Gastrocnemius medialis (tissue), 4 donors: ENCODE measurements at regions of chr5 and their contacts with region 1.

Region 1: DNA sequence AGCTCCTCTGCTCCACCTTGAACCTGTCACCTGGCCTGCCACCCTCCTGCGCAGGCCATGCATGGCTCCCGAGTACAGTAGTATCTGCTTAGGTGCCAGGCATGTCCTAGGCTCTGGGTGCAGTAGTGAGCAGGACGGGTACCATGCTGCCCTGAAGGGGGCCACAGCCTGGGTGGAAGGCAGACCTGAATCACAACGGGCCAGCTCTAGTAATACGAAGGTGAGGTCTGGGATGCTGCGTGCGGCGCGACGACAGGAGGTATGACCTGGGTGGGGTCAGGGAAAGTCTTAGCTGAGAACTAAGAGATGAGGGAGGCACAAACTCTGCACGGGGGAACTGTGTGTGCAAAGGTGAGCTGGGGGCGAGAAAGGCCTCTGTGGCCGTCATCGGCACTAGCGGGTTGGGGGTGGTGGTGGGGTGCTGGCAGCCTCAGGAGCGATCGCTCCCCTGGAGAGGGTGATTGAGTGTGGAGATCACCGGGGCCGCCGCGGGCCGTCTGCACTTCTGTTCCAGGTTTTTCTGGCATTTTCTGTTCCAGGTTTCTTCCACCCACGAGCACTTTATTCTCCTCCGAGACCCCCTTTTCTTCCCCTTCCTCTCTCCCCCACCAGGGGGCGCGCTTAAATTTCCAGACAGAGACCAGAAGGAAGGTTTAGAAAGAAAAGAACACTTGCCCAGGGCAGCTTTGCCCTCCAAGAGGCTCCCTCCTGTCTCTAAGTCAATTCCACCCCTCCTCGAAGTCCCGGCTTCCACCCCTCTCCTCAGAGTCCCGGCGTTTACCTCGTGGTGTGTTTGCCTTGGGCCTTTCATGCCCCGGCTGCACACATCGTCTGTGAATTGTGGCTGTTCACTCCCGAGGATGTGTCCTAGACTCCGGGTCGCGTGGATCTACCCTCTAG is 15.1 kb downstream of the PDLIM4 start:
- DNase-seq: no peak
- ATAC-seq: peak; percentile 64 to 78
- H3K4me3 ChIP-seq: no peak overlapping the region
- H3K27ac ChIP-seq: no peak overlapping the region
- H3K4me1 ChIP-seq: peaks cover 5 to 6% of the 10 kb centered on the region in 2 donors
- H3K27me3 ChIP-seq: no peaks in the 10 kb centered on the region
- CTCF ChIP-seq: peak; percentile 63 to 86 (median 86)
- POLR2A ChIP-seq: no peak

Region 2: DNA sequence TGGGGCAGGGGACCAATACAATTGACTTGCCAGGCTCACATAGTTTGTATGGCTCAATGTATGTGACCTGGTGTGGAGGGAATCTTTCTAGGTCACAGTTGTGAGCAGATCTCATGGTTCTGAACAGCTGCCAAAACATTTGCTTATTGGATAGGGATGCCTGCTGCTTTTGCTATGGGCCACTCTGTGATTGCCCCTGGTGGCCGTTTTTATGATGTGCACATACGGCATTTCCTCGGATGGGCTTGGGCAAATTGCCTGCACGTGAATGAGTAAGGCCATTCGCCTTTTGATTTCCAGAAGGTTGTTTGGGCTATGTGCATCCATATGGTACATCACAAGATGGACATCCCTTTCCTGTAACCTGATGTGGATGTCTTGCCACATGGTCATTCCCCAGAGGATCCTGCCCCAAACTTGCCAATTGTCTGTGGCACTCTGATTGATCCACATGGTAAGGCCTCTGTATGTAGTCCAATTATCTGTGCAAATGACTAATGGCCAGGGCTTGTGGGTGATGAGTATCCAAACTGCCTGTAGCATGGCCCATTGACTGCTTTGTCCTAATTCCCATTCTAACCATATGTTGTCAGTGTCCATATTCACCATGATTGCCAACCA is 11.0 kb after region 1 on chr5:
- in situ Hi-C with region 1: no loop called
- intact Hi-C with region 1: no loop called
- DNase-seq: no peak
- ATAC-seq: no peak
- H3K4me3 ChIP-seq: no peak overlapping the region
- H3K27ac ChIP-seq: no peak overlapping the region
- H3K4me1 ChIP-seq: no peaks in the 10 kb centered on the region
- H3K27me3 ChIP-seq: no peaks in the 10 kb centered on the region
- CTCF ChIP-seq: peak in 4 of 5 experiments; percentile 20 to 46 (median 41)
- POLR2A ChIP-seq: no peak

Region 3: DNA sequence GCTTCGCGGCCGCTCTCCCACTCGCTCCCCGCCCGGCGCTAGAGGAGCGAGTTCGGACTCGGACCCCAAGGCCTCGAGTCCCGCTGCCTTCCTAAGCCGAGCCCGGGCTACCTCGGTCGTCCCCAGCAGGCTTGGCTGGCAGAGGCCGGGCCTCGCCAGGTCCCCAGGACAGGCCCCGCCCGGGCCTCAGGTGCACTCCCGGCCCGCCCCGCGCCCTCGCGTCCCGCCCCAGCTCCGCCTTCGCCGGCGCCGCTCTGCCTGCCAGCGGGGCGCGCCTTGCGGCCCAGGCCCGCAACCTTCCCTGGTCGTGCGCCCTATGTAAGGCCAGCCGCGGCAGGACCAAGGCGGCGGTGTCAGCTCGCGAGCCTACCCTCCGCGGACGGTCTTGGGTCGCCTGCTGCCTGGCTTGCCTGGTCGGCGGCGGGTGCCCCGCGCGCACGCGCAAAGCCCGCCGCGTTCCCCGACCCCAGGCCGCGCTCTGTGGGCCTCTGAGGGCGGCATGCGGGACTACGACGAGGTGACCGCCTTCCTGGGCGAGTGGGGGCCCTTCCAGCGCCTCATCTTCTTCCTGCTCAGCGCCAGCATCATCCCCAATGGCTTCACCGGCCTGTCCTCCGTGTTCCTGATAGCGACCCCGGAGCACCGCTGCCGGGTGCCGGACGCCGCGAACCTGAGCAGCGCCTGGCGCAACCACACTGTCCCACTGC is 97.1 kb after region 1 on chr5 and contains the start of gene SLC22A5:
- in situ Hi-C with region 1: loop called in 1 of 4 experiments (anchors 10 kb)
- intact Hi-C with region 1: no loop called
- DNase-seq: peak; percentile 61 to 80
- ATAC-seq: peak; percentile 73 to 75
- H3K4me3 ChIP-seq: peak within 1 kb of the TSS; percentile 64 to 82 (median 78)
- H3K27ac ChIP-seq: peak within 1 kb of the TSS; percentile 92 to 99 (median 96)
- H3K4me1 ChIP-seq: peaks cover 33 to 36% of the 10 kb centered on the region in 2 donors
- H3K27me3 ChIP-seq: no peaks in the 10 kb centered on the region
- CTCF ChIP-seq: peak in 1 of 5 experiments; percentile 18
- POLR2A ChIP-seq: peak; percentile 93 to 95
- total RNA-seq, gene SLC22A5: 56.2 to 116 (median 79.2) TPM

Region 4: GRCh38 chr5:132490486-132491367 is 218.2 kb after region 1 on chr5 and contains the start of gene IRF1:
- in situ Hi-C with region 1: loop called in 1 of 4 experiments (anchors 10 kb)
- intact Hi-C with region 1: no loop called
- DNase-seq: peak; percentile 93 to 96
- ATAC-seq: peak; percentile 90 to 92
- H3K4me3 ChIP-seq: peak within 1 kb of the TSS; percentile 70 to 90 (median 84)
- H3K27ac ChIP-seq: peak within 1 kb of the TSS; percentile 86 to 95 (median 90)
- H3K4me1 ChIP-seq: peaks cover 36 to 40% of the 10 kb centered on the region in 2 donors
- H3K27me3 ChIP-seq: no peaks in the 10 kb centered on the region
- CTCF ChIP-seq: no peak
- POLR2A ChIP-seq: peak; percentile 96 to 97
- total RNA-seq, gene IRF1: 5.5 to 20.6 (median 8.4) TPM

Region 5: DNA sequence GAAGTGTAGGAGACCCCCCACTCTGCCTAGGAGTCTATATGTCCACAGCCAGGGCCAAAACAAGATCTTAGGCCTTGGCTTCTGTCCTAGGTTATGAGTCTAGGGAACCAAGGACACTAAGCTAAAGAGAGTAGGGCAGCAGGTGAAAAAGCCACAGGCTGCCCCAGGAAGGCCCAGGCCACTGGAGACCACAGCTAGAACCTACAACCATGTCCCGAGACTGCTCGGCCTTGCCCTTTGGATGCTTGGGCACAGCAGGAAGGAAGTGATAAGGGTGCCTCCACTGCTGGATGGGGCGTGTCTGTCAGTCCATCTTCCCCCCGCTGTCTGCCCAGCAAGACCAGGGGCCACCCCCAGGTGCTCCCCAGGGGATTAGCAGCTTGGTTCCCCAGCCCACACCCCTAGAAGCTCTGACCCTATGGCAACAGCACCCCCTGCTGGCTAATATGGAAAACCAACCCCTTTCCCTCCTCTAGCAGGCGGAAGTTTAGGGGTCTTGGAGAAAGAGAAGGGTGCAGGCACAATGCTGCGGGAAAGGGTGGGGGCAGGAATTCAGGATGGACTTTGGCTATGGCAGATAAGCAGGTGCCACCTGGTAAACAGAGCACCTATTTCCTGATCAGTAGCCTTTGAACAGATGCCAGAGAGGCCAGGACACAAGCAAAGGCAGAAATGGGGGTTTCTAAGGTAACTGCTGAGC is 228.5 kb after region 1 on chr5:
- in situ Hi-C with region 1: loop called in 3 of 4 experiments (anchors 10 to 25 kb)
- intact Hi-C with region 1: loop called (anchors 2 kb)
- DNase-seq: peak; percentile 35 to 50
- ATAC-seq: peak; percentile 25 to 44
- H3K4me3 ChIP-seq: no peak overlapping the region
- H3K27ac ChIP-seq: peak overlapping the region; percentile 36 to 54 (median 42)
- H3K4me1 ChIP-seq: peaks cover 17 to 21% of the 10 kb centered on the region in 2 donors
- H3K27me3 ChIP-seq: no peaks in the 10 kb centered on the region
- CTCF ChIP-seq: peak; percentile 89 to 96 (median 90)
- POLR2A ChIP-seq: no peak

Region 6: GRCh38 chr5:132866342-132867045 is 593.9 kb after region 1 on chr5 and contains the starts of genes GDF9 and UQCRQ:
- in situ Hi-C with region 1: no loop called
- intact Hi-C with region 1: no loop called
- DNase-seq: peak; percentile 95 to 96
- ATAC-seq: peak; percentile 99
- H3K4me3 ChIP-seq: peak within 1 kb of the TSS; percentile 63 to 92 (median 85)
- H3K27ac ChIP-seq: peak within 1 kb of the TSS; percentile 83 to 93 (median 88)
- H3K4me1 ChIP-seq: peaks cover 27 to 31% of the 10 kb centered on the region in 2 donors
- H3K27me3 ChIP-seq: no peaks in the 10 kb centered on the region
- CTCF ChIP-seq: no peak
- POLR2A ChIP-seq: peak; percentile 91 to 93
- total RNA-seq, gene GDF9: 0.13 to 2.5 (median 0.46) TPM in 3 of 4 donors, not detected in the other
- total RNA-seq, gene UQCRQ: 273 to 566 (median 326) TPM